ENCODE measurements at regions of chr5 and their contacts with region 1.

Region 1: DNA sequence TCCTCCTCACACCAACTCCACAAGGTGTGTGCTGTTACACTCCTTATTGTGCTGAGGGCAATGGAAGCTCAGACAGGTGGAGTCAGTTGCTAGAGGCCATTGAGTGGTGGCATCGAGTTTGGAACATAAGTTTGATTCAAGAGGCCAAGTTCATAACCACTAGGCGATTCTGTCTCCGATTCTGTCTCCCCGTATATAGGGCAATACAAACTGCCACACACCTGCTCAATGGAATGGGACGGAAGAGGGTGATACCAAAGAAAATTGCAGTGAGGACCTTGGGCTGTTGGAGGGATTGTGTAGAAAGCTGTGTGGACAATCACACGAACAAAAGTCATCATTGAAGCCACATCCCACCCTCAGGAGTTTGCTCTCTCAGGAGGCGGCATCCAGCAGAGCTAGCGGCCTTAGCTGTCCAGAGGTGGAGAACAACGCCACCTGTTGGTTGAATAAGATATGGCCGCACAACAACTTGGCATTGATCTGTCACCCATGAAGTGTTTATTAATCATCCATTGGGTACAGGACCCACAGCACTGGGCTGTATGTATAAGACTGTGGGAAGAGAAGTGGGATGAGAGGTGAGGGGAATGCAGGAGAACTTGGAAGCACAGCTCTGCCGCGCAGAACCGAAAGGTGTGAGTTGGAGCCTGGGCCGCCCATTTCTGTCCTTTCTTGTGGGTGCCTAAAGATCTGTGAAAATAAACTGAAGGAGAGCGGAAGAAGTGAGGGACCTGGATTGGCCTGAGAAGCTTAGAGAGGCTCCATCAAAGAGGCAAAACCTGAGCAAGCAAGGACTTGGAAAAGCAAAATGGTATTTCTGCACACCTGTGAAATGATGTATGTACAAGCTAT is 16.1 kb upstream of the NEUROG1 start:
- DNase-seq: peak; percentile 72
- H3K4me3 ChIP-seq: no peak overlapping the region
- CTCF ChIP-seq: peak; percentile 85

Region 2: DNA sequence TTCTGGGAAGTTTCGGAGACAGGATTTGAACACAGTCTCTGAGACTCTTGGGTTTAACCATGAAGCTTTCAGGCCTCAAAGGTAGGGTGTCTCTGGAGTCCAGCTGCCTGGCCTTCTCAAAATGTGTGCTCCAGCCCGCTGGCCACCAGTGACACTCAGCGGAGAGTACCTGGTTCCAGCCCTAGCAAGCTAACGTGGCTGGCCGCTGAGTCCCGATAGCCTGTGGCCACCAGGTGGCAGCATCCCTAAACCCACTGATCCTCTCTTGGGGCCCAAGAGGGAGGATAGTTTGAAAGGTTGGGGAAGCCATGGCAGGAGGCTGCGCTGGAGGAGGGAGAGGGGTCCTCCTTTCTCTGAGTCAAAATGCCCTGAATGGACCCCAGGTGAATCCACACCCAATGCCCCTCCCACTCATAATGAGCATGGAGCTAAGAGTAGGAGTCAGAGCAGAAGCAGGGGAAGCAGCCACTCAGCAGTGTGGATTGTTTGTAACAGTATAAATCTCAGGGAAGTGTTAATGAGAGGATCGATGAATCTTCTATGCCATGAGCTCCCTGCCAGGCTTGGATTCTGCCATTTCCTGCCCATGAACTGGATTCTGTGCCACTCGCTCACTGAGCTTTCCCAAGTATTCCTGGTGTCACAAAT is 94.3 kb before region 1 on chr5:
- in situ Hi-C with region 1: loop called (anchors 5 kb)
- DNase-seq: peak; percentile 48
- H3K4me3 ChIP-seq: no peak overlapping the region
- CTCF ChIP-seq: peak; percentile 90